Activated CD8-positive, alpha-beta memory T cell treated with anti-CD3 and anti-CD28 coated beads, Interleukin-2, amount 10 ng/mL, durations not matched to agents 7 days and 5 days (primary cell): ENCODE measurements at regions of chr15 and their contacts with region 1.

Region 1: GRCh38 chr15:74438721-74439316 is 5.1 kb upstream of the SEMA7A start:
- DNase-seq: peak; percentile 87
- ATAC-seq: peak; percentile 72
- H3K4me3 Mint-ChIP-seq: no peak overlapping the region
- H3K27ac Mint-ChIP-seq: no peak overlapping the region
- H3K4me1 Mint-ChIP-seq: peaks cover 41% of the 10 kb centered on the region
- H3K27me3 Mint-ChIP-seq: no peaks in the 10 kb centered on the region

Region 2: DNA sequence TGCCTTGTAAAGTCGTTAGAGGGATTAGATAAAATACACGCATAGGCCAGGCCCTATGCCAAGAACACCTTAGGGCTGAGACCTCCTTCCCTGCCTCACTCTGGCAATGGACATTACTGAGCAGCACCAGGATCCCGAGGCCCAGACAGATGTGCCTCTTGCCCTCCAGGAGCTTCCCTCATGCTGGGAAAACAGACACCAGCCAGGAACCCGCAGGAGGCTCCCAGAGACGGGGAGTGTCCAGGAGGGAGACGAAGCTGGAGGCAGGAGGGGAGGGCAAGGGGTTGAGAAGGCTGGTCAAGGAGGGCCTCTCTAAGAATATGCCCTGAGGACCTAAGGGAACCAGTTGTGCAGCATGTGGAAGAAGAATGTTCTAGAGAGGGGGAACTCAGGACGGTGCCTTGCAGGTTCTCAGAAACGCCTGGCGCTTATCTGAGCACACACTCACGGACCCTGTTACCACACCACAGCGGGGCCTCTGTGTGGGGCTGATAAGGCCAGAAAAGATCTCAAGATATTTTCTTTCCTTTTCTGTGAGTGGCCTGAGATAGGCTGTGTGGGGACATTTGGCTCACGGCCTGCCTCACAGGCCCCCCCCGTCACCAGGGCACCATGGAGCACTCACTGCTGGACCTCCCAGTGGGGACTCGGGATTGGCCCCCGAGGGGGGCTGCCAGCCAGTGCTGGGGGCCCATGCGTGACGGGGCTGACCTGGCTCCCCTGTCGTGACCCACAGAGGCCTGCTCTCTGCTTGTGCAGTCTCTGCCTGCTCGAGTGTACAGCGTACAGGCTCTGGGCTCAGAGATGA is 49.4 kb before region 1 on chr15:
- CTCF ChIA-PET with region 1: interaction called, 668 read pairs
- DNase-seq: no peak
- ATAC-seq: no peak
- H3K4me3 Mint-ChIP-seq: no peak overlapping the region
- H3K27ac Mint-ChIP-seq: no peak overlapping the region
- H3K4me1 Mint-ChIP-seq: peaks cover 51% of the 10 kb centered on the region
- H3K27me3 Mint-ChIP-seq: no peaks in the 10 kb centered on the region

Region 3: GRCh38 chr15:74428442-74428787 is 10.4 kb before region 1 on chr15:
- CTCF ChIA-PET with region 1: interaction called, 11 read pairs
- DNase-seq: no peak
- ATAC-seq: no peak
- H3K4me3 Mint-ChIP-seq: no peak overlapping the region
- H3K27ac Mint-ChIP-seq: peak overlapping the region; percentile 67
- H3K4me1 Mint-ChIP-seq: peaks cover 65% of the 10 kb centered on the region
- H3K27me3 Mint-ChIP-seq: no peaks in the 10 kb centered on the region

Region 4: GRCh38 chr15:74453925-74454763 is 15.3 kb after region 1 on chr15:
- CTCF ChIA-PET with region 1: interaction called, 23 read pairs
- DNase-seq: no peak
- ATAC-seq: peak; percentile 85
- H3K4me3 Mint-ChIP-seq: no peak overlapping the region
- H3K27ac Mint-ChIP-seq: peak overlapping the region; percentile 76
- H3K4me1 Mint-ChIP-seq: peaks cover 38% of the 10 kb centered on the region
- H3K27me3 Mint-ChIP-seq: no peaks in the 10 kb centered on the region

Region 5: GRCh38 chr15:74460871-74461846 is 22.3 kb after region 1 on chr15 and contains the start of gene UBL7:
- CTCF ChIA-PET with region 1: interaction called, 23 read pairs
- DNase-seq: peak; percentile 99
- ATAC-seq: peak; percentile 97
- H3K4me3 Mint-ChIP-seq: peak within 1 kb of the TSS; percentile 97
- H3K27ac Mint-ChIP-seq: peak within 1 kb of the TSS; percentile 94
- H3K4me1 Mint-ChIP-seq: peaks cover 55% of the 10 kb centered on the region
- H3K27me3 Mint-ChIP-seq: no peaks in the 10 kb centered on the region
- total RNA-seq, gene UBL7: 55.9 to 60.9 TPM